Panc1 (cell line): ENCODE measurements at regions of chr2 and their contacts with region 1.

Region 1: DNA sequence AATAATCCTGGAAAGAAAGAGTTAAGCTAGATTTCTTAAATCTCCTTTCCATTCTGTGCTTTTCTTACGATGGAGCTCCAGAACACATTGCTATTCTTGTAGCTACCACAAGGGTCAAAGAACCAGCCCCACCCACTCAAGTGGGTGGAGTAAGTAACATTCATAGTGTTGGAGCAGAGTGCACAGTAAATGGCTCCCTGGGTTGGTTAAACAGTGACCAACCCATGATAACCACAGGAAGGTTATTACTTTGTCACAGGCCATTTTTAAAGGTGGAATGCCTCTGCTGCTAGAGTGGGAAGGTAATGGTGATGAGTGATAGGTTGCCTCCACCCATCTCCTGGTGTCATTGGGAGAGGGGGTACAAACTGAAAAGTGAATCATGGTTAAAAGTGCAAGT is 13.9 kb downstream of the ARPC2 start:
- DNase-seq: no peak
- ATAC-seq: peak; percentile 77; the same call in 1 of the 2 replicates
- H3K4me3 ChIP-seq: no peak overlapping the region
- H3K27ac ChIP-seq: no peak overlapping the region
- H3K4me1 ChIP-seq: no peaks in the 10 kb centered on the region
- H3K27me3 ChIP-seq: no peaks in the 10 kb centered on the region
- CTCF ChIP-seq: no peak; the same call in 1 of the 2 replicates

Region 2: GRCh38 chr2:217943446-217944389 is 287.2 kb before region 1 on chr2:
- CTCF ChIA-PET with region 1: no interaction called
- POLR2A ChIA-PET with region 1: no interaction called
- in situ Hi-C with region 1: no loop called
- intact Hi-C with region 1: no loop called
- DNase-seq: no peak
- ATAC-seq: peak; percentile 79
- H3K4me3 ChIP-seq: no peak overlapping the region; a peak in 1 of 4 replicates
- H3K27ac ChIP-seq: no peak overlapping the region
- H3K4me1 ChIP-seq: no peaks in the 10 kb centered on the region
- H3K27me3 ChIP-seq: peaks cover 3% of the 10 kb centered on the region; the same call in 1 of the 2 replicates
- CTCF ChIP-seq: no peak

Region 3: GRCh38 chr2:218218268-218219185 is 12.4 kb before region 1 on chr2:
- CTCF ChIA-PET with region 1: interaction called, 12 read pairs
- POLR2A ChIA-PET with region 1: no interaction called
- in situ Hi-C with region 1: no loop called
- intact Hi-C with region 1: no loop called
- DNase-seq: no peak
- ATAC-seq: no peak
- H3K4me3 ChIP-seq: peak overlapping the region; percentile 97
- H3K27ac ChIP-seq: peak overlapping the region; percentile 92
- H3K4me1 ChIP-seq: peaks cover 37% of the 10 kb centered on the region
- H3K27me3 ChIP-seq: no peaks in the 10 kb centered on the region
- CTCF ChIP-seq: no peak